ENCODE measurements at regions of chr5 and their contacts with region 1.

Region 1: GRCh38 chr5:43631182-43631910 is 28.4 kb downstream of the NNT start:
- DNase-seq: no peak
- ATAC-seq: peak; percentile 83
- H3K4me3 Mint-ChIP-seq: no peak overlapping the region
- H3K27ac Mint-ChIP-seq: no peak overlapping the region
- H3K4me1 Mint-ChIP-seq: peaks cover 2% of the 10 kb centered on the region
- H3K27me3 Mint-ChIP-seq: no peaks in the 10 kb centered on the region

Region 2: GRCh38 chr5:43602461-43603343 is 28.6 kb before region 1 on chr5 and contains the start of gene NNT:
- CTCF ChIA-PET with region 1: interaction called, 14 read pairs
- DNase-seq: peak; percentile 86
- ATAC-seq: peak; percentile 91
- H3K4me3 Mint-ChIP-seq: peak within 1 kb of the TSS; percentile 94
- H3K27ac Mint-ChIP-seq: peak within 1 kb of the TSS; percentile 86
- H3K4me1 Mint-ChIP-seq: peaks cover 40% of the 10 kb centered on the region
- H3K27me3 Mint-ChIP-seq: no peaks in the 10 kb centered on the region
- total RNA-seq, gene NNT: 103 to 115 TPM

Region 3: DNA sequence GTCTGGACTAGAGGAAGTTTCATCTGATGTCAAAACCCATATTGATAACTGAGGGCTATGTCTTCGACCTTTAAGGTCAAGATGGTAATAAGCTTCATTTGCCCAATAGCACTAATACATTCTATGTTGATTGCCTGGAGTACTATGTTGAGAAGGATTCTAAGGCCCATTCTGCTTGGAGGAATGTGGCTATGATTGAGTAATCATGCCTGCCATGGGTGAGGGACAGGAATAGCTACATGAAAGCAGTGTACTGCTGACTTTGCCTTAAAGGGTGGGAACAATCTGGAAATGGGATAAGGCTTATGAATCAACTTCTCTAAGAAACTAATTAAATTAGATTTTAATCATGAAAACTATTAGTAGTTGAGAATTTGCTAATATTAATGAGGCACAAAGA is 14.8 kb before region 1 on chr5:
- CTCF ChIA-PET with region 1: interaction called, 20 read pairs
- DNase-seq: no peak
- ATAC-seq: no peak
- H3K4me3 Mint-ChIP-seq: no peak overlapping the region
- H3K27ac Mint-ChIP-seq: no peak overlapping the region
- H3K4me1 Mint-ChIP-seq: no peaks in the 10 kb centered on the region
- H3K27me3 Mint-ChIP-seq: no peaks in the 10 kb centered on the region

Region 4: DNA sequence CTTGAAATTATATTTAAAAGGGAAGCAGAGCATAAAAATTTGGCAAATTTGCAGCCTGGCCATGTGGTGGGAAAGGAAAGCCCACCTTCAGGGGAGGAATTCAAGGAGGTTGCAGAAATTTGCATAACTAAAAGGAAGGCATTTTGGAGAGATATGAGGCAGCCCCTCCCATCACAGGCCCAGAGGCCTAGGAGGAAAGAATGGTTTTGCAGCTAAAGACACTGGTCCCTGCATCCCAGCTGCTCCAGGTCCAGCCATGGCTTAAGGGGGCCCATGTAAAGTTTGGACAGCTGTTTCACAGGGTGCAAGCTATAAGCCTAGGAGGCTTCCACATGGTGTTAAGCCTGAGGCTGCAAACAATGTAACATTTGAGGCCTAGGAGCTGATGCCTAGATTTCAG is 184.2 kb after region 1 on chr5:
- CTCF ChIA-PET with region 1: no interaction called
- DNase-seq: no peak
- ATAC-seq: no peak
- H3K4me3 Mint-ChIP-seq: no peak overlapping the region
- H3K27ac Mint-ChIP-seq: no peak overlapping the region
- H3K4me1 Mint-ChIP-seq: no peaks in the 10 kb centered on the region
- H3K27me3 Mint-ChIP-seq: no peaks in the 10 kb centered on the region

Measured in activated CD8-positive, alpha-beta memory T cell treated with anti-CD3 and anti-CD28 coated beads, Interleukin-2, amount 10 ng/mL, durations not matched to agents 7 days and 5 days (primary cell).